ENCODE measurements at regions of chr6 and their contacts with region 1.

Region 1: DNA sequence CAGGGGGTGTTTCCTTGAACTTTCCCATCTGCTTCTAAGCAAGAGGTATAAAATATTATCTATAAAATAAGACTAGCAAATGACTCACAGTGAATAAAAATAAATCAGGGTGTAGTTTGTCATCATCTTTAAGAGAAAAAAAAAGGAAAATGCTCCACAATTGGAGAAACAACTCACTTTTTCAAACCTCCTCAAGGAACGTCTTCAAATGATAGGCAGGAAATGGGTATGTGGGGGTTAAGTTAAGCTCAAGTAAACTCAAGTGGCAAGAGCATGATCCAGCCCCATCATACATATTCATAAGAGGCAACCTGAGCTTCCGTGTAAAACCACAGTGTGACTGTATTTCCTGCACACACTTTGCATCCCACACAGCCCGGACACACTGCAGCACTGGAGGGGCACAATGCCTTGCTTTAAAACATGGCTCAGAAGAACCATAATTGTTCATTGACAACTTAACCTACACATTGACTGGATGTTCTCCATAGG is 58.5 kb upstream of the CEP85L start:
- DNase-seq: no peak
- ATAC-seq: peak in 4 of 8 donors; percentile 8 to 37 (median 24)
- H3K4me3 ChIP-seq: peak overlapping the region in 6 of 10 donors; percentile 41 to 51 (median 44)
- H3K27ac ChIP-seq: peak overlapping the region in 4 of 10 donors; percentile 39 to 83 (median 50)
- H3K4me1 ChIP-seq: peaks cover 7 to 48% (median 30%) of the 10 kb centered on the region in 9 donors
- H3K27me3 ChIP-seq: no peaks in the 10 kb centered on the region
- CTCF ChIP-seq: no peak

Region 2: DNA sequence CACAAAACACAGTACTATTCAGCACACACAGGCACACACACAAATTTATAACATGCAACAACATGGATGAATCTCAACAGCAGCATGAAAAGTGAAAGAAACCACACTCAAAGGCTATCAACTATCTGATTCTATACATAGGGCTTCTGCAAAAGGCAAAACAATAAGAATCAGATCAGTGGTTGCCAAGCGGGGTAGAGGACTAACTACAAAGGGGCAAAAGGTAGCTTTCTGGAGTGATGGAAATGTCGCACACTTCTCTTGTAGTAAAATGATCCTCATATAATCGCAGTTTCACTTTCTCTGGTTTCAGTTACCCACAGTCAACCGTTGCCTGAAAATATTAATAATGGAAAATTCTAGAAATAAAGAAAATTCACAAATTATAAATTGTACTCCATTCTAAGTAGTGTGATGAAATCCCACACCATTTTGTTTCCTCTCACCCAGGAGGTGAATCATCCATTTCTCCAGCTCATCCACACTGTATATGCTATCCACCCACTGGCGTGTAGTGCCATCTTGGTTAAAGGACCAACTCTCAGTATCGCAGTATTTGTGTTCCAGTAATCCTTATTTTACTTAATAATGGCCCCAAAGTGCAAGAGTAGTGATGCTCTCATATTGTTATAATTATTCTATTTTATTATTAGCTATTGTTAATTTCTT is 174.6 kb before region 1 on chr6:
- intact Hi-C with region 1: no loop called
- DNase-seq: no peak
- ATAC-seq: no peak
- H3K4me3 ChIP-seq: no peak overlapping the region
- H3K27ac ChIP-seq: peak overlapping the region in 4 of 10 donors; percentile 69 to 89 (median 77)
- H3K4me1 ChIP-seq: peaks cover 0 to 32% (median 8%) of the 10 kb centered on the region in 9 donors
- H3K27me3 ChIP-seq: no peaks in the 10 kb centered on the region
- CTCF ChIP-seq: no peak

Region 3: DNA sequence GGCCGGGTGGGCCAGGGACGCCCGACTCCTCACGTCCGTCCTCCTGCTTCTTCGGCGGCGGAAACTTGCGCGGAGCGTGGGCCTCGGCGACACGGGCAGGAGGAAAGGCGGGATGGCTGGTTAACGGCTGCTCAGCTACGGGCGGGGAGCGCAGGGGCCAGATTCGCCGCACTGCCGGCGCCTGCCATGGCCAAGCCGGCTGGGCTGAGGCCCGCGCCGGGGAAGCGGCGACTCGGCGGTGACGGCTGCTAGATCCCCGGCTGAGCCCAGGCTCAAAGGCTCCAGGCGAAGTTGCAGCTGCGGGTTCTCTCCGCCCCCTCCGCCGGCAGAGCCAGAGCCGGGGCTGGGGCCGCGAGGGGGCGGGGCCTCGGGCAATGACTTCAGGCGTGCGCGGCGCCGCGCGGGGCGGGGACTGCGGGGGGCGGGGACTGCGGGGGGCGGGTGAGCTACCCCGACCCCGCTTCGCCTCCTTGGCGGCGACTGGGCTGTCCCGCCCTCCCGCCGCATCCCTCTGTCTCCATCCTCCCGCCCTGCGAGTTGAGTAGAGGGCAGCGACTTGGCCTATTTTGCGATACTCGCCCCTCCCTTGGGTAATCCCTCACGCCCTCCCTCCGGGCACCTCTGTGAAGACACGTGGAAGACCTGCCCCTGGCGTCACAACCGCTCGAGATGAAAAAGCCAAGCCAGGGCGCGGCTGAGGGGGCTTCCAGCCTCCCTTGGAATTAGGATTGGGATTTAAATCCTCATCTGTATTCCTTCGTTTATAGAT is 58.4 kb before region 1 on chr6 and contains the start of gene CEP85L:
- intact Hi-C with region 1: loop called in 8 of 10 experiments (anchors 5 to 10 kb)
- DNase-seq: peak; percentile 91 to 94
- ATAC-seq: peak; percentile 97 to 99 (median 98)
- H3K4me3 ChIP-seq: peak within 1 kb of the TSS; percentile 71 to 98 (median 91)
- H3K27ac ChIP-seq: peak within 1 kb of the TSS; percentile 89 to 99 (median 97)
- H3K4me1 ChIP-seq: peaks cover 0 to 25% (median 21%) of the 10 kb centered on the region in 9 donors
- H3K27me3 ChIP-seq: no peaks in the 10 kb centered on the region
- CTCF ChIP-seq: peak in 1 of 9 donors; percentile 3
- total RNA-seq, gene CEP85L: 5.4 to 19.2 (median 8.1) TPM

Region 4: DNA sequence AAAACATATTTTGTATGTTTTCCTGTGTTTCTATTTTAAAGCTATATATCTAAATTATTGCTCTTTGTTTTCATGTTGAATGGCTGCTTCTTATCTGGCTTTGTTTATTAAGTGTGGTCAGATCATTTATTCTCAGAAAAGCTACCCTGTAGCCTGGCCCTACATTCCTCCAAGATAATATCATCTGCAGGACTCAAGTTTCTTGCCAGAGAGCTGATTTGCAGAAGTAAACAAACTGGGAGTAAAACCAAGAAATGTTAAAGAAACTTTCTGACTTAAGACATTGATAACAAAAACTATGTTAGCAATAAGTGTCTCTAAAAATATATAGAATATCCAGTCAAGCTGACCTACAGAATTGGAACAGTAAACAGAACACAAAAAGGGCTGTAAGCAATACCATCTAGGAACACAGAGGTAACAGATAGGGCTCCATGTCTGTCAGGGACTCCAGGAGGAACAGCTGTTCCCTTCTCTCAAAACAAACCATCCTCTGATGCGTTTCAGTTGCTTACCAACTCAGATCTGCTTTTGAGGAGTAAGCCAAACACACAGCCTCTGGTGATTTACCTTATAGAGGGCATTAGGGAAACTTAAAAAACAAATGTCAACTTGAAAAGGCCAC is 41.0 kb before region 1 on chr6:
- intact Hi-C with region 1: loop called in 1 of 10 experiments (anchors 5 kb)
- DNase-seq: no peak
- ATAC-seq: peak in 1 of 8 donors; percentile 22
- H3K4me3 ChIP-seq: no peak overlapping the region
- H3K27ac ChIP-seq: peak overlapping the region in 5 of 10 donors; percentile 34 to 46 (median 38)
- H3K4me1 ChIP-seq: peaks cover 0 to 32% (median 14%) of the 10 kb centered on the region in 9 donors
- H3K27me3 ChIP-seq: no peaks in the 10 kb centered on the region
- CTCF ChIP-seq: no peak

Region 5: DNA sequence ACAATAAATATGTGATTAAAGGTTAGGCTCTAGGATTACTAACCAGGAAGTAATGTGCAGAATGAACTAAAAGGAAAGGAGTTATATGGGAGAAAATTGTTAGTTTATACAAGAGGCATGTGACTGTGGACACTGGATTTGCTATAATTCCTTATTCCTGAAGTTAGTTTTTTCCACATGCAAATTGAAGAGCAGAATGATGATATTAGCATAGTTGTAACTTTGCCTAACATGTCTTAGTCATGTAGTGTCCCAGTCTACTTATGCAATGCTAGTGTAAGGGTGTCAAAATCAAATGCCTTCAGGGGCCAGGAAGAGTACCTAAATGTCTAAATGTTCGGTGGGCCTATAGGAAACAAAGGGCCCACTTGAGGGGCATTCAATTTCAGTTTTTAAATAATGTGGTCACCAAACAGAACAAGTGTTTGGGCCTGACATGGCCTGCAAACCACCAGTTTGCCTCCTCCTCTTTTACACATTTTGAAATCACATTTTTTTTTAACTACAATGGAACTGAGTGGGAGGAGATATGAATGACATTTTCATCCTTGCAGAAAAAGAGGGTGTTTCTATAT is 30.5 kb before region 1 on chr6:
- intact Hi-C with region 1: no loop called
- DNase-seq: no peak
- ATAC-seq: no peak
- H3K4me3 ChIP-seq: no peak overlapping the region
- H3K27ac ChIP-seq: no peak overlapping the region
- H3K4me1 ChIP-seq: peaks cover 0 to 13% (median 0%) of the 10 kb centered on the region in 9 donors
- H3K27me3 ChIP-seq: no peaks in the 10 kb centered on the region
- CTCF ChIP-seq: no peak

Measured in heart right ventricle (tissue), 16 donors.